OCI-LY7 (cell line): ENCODE measurements at regions of chr17 and their contacts with region 1.

Region 1: DNA sequence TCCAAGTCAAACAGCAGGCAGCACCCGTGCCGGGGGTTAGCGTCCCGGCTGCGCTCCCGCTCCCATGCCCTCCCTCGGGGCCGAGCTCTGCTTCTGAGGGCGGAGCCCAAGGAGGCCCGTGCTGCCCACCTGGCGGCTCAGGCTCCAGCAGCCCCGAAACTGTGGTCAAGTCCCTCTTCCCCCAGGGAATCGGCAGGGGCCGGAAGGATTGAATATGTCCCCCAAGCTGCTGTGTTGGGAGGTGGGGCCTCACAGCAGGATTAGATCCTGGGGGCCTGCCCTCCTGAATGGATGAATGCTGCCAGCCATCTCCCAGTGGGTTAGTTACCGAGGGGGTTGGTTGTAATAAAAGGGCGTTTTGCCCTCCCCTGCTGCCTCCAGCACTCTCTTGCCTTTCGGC is 33.9 kb downstream of the MAP2K3 start:
- DNase-seq: no peak
- H3K4me3 ChIP-seq: no peak overlapping the region
- H3K27ac ChIP-seq: no peak overlapping the region
- H3K4me1 ChIP-seq: peaks cover 14% of the 10 kb centered on the region
- CTCF ChIP-seq: no peak

Region 2: DNA sequence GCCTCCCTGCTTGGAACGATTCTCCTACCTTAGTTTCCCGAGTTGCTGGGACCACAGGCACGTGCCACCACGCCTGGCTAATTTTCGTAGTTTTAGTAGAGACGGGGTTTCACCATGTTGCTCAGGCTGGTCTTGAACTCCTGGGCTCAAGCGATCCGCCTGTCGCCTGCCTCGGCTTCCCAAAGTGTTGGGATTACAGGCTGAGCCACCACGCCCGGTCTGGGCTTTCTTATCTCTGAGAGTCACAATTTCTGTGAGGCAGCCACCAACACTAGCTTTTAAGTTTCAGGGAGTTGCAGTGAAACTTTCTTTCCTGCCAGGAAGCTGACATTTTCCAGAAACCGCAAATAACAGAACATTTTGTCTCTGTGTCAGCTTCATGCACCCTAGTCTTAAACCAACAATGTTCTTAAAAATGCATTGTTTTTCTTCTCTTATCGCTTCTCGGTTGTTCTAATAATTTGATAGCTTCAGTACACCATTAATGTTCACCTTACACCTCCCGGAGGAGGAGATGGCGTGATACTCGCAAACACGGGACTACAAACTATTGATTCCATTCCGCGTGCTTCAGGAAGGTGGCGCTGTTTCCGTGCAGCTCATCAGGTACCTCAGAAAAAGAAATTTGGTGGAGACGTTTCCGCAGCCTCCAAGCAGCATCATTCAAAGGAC is 199.1 kb before region 1 on chr17:
- CTCF ChIA-PET with region 1: no interaction called
- POLR2A ChIA-PET with region 1: no interaction called
- intact Hi-C with region 1: no loop called
- DNase-seq: peak; percentile 81
- H3K4me3 ChIP-seq: no peak overlapping the region
- H3K27ac ChIP-seq: no peak overlapping the region
- H3K4me1 ChIP-seq: peaks cover 4% of the 10 kb centered on the region
- CTCF ChIP-seq: peak; percentile 94

Region 3: DNA sequence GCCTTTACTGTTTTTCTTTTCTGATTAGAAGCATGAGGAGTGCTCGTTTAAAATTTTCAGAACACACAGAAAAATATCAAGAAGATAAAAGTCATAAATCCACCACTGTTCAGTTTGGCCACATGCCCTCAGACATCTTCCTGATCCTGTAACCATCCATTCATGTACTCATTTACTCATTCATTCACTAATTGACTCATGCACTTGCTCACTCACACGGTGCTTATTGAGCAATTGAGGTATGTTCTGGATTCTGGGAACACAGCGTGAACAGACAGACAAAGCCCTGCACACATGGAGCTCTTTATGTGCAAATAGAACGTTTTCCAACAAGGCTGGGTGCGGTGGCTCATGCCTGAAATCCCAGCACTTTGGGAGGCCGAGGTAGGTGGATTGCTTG is 55.1 kb before region 1 on chr17:
- CTCF ChIA-PET with region 1: no interaction called
- POLR2A ChIA-PET with region 1: no interaction called
- intact Hi-C with region 1: loop called (anchors 10 kb)
- DNase-seq: no peak
- H3K4me3 ChIP-seq: no peak overlapping the region
- H3K27ac ChIP-seq: no peak overlapping the region
- H3K4me1 ChIP-seq: peaks cover 18% of the 10 kb centered on the region
- CTCF ChIP-seq: no peak

Region 4: DNA sequence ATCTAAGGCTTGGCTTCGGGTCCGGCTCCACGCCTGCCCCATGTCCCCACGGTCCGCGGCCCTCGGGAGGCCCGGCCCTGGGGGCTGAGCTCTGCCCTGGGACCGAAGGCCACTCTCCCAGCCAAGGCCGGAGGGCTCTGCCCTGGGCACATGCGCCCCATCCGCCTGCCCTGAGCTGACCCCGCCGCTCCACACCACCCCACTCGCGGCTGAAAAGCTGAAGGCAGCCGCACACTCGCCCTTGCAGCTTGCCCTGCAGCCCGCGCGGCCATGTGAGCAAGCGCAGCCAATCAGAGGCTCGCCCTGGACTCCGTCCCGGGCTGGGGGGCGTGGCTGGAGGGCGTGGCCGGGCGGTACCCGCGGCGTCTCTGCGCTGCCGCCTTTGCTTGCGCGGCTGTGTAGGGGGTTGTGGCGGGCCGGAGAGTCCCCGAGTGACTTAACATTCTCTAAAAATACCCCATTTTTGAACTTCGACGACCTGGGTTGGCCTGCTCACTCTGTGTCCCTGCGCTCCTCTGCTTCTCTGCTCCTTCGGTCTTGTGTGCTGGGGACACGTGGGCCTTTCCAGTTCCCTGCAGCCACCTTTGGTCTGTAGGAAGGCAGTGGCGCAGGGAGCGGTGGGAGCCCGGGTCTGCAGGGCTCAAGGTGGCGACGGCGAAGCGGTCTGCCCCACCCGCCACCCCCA is 42.7 kb before region 1 on chr17:
- CTCF ChIA-PET with region 1: no interaction called
- POLR2A ChIA-PET with region 1: no interaction called
- intact Hi-C with region 1: loop called (anchors 2 kb)
- DNase-seq: peak; percentile 94
- H3K4me3 ChIP-seq: peak overlapping the region; percentile 71
- H3K27ac ChIP-seq: no peak overlapping the region
- H3K4me1 ChIP-seq: peaks cover 61% of the 10 kb centered on the region
- CTCF ChIP-seq: 0 out of 2 replicates have a peak, but pooled peaks have one; percentile 24

Region 5: DNA sequence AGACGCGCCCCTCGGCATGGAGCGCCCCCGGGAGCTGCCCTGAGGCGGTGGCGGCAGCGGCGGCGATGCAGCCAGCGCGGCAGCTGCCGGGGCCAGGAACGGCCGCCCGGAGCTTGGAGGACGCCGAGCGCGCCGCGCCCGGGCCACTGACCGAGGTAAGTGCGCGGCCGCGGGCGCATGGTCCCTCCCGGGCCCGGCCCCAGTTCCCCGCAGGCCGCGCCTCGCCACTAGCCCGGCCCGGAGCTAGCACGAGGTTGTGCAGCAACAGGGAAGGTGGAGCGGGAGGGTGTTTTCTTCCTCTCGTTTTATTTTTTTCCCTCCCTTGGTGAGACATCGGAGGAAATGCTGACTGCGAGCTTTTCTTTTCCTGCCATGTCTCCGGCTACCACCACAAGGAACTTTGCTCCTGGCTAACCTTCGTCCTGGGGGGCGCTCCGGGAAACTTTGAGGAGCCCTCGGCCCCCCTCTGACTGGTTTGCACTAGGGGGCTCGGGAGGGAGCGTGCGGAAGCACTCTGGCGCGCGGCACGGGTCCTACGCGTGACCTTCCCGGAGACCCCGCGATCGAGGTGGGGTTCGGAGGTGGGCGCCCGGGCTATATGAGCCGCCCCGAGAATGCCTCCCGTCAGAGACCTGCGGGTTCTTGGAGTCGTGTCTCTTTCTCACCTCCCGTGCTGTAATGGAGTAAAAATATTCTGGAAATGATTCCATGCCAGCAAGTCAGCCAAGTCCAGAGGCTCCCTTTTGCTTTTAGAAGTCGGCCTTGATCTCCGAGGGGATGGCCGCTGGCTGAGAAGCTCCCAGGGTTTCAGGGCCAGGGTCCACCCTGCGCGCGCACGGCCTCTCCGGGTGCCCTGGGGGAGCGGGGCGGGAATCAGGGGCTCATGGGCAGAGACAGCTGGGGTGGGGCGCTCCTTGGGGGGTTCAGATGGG is 58.6 kb after region 1 on chr17:
- CTCF ChIA-PET with region 1: no interaction called
- POLR2A ChIA-PET with region 1: no interaction called
- intact Hi-C with region 1: loop called (anchors 1 kb)
- DNase-seq: no peak
- H3K4me3 ChIP-seq: peak overlapping the region; percentile 48
- H3K27ac ChIP-seq: no peak overlapping the region
- H3K4me1 ChIP-seq: peaks cover 4% of the 10 kb centered on the region
- CTCF ChIP-seq: no peak

Region 6: DNA sequence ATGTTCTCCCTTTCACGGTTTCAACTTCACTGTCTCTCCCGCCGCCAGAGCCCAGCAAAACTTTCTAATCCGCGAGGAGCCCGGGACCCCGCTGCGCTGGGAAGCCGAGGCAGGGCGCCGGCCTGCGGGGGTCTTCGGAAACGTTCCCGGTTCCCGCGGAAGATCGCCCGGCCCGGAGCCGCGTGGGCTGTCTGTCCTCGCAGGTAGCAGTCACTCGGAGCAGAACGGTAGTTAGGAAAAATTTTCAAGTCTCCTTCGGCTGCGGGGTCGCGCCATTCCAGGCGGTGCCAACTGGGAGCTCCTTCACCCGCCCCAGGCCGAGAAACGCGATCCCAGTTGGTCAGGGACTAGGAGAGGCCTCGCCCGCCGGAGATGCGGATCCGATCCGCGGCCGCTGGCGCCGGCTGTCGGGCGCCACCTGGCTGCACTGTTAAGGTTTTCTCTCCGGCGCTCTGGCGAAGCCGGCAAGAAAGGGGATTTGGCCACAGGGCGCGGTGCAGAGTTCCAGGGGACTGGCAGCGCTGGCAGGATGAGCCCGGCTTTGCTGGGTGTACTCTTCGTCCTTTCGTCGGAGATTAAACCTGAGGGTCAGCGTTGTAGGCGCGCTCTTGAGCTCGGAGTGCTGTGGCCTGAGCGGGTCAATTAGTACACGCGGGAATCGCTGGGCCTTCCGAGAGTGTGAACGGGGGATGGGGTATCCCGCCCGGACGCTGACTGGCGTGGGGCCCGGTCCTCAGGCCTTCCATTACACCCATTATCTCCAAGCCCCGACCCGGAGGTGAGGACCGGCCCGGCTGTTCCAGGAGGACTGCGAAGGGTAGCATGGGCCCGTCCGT is 193.1 kb after region 1 on chr17:
- CTCF ChIA-PET with region 1: no interaction called
- POLR2A ChIA-PET with region 1: no interaction called
- intact Hi-C with region 1: loop called (anchors 5 kb)
- DNase-seq: peak; percentile 50
- H3K4me3 ChIP-seq: no peak overlapping the region
- H3K27ac ChIP-seq: no peak overlapping the region
- H3K4me1 ChIP-seq: peaks cover 3% of the 10 kb centered on the region
- CTCF ChIP-seq: peak; percentile 73